Vagina (tissue), 2 donors: ENCODE measurements at regions of chr5 and their contacts with region 1.

Region 1: GRCh38 chr5:18105449-18105848 is 471.2 kb downstream of the TAF11L14 start:
- DNase-seq: no peak
- H3K4me3 ChIP-seq: no peak overlapping the region
- H3K27ac ChIP-seq: no peak overlapping the region
- H3K4me1 ChIP-seq: no peaks in the 10 kb centered on the region
- H3K27me3 ChIP-seq: no peaks in the 10 kb centered on the region
- CTCF ChIP-seq: no peak
- POLR2A ChIP-seq: no peak

Region 2: DNA sequence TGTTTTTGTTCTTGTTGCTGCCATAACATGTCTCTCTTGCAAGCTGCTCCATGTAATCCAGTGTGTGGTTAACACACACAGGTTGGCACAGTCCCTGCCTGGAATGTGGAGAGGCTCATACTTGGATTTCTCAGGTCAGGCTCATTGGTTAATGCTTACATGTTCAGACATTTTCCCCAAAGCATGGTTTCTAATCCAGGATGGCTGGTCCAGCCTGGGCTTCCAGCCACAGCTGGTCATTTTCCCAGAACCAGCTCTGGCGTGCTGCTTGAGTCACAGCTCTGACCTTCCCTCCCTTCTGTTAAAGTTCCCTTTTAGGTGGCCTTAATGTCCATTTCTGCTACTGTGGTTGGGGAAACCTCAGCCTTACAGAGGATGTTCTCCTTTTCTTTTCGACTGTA is 176.9 kb before region 1 on chr5:
- intact Hi-C with region 1: no loop called
- DNase-seq: no peak
- H3K4me3 ChIP-seq: no peak overlapping the region
- H3K27ac ChIP-seq: no peak overlapping the region
- H3K4me1 ChIP-seq: peaks cover 13% of the 10 kb centered on the region
- H3K27me3 ChIP-seq: no peaks in the 10 kb centered on the region
- CTCF ChIP-seq: no peak
- POLR2A ChIP-seq: no peak

Region 3: GRCh38 chr5:18091758-18092157 is 13.7 kb before region 1 on chr5:
- intact Hi-C with region 1: loop called (anchors 2 kb)
- DNase-seq: no peak
- H3K4me3 ChIP-seq: no peak overlapping the region
- H3K27ac ChIP-seq: no peak overlapping the region
- H3K4me1 ChIP-seq: no peaks in the 10 kb centered on the region
- H3K27me3 ChIP-seq: no peaks in the 10 kb centered on the region
- CTCF ChIP-seq: no peak
- POLR2A ChIP-seq: no peak